CD4-positive, alpha-beta memory T cell (primary cell): ENCODE measurements at regions of chr7 and their contacts with region 1.

Region 1: DNA sequence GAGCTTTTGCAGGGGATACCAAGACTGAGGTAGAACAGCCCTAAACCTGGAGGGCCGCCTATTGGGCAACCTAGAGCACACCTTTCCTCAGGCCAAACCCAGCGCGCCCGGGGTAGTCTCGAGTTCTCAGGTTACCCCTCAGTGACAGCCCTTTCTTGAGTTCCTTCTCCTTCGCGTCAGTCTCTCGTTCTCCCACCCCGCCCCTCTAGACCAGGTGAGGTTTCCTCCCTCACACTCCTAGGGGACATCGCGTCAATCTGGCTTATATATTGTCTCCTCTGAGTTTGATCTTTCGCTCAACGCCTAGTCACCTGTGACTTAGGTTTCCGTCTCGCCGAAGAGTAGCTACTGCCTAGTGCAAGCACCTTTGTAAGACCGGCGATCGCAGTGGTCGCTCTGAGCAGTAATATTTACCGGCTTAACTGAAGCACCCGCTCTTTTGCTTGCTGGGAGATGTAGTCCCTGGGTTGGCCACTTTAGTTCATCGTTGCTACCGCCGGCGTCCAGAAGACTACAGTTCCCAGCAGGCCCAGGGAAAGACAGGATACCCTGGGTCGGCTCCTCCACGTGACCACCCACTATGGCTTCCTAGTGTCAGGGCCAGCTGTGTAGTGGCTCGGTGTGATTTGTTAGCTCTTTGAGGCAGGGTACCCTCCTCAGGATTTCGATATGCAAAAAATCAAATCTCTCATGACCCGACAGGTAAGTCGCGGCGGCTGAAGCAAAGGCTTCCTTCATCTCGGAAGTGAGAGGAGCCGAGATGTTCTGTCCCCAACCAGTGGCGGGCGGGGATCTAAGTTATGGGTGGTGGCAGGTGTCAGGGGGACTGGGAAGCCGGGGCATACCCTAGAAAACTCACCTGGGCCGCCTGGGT is at the start of gene VPS50:
- DNase-seq: peak; percentile 95 to 98 (median 97)
- H3K4me3 ChIP-seq: peak within 1 kb of the TSS; percentile 66 to 99
- H3K4me3 Mint-ChIP-seq: peak within 1 kb of the TSS; percentile 91 to 97 (median 95)
- H3K27ac ChIP-seq: peak within 1 kb of the TSS; percentile 86
- H3K27ac Mint-ChIP-seq: peak within 1 kb of the TSS; percentile 85 to 100 (median 98)
- H3K4me1 ChIP-seq: peaks cover 31% of the 10 kb centered on the region
- H3K4me1 Mint-ChIP-seq: peaks cover 9 to 20% (median 14%) of the 10 kb centered on the region in 4 donors
- H3K27me3 ChIP-seq: no peaks in the 10 kb centered on the region
- H3K27me3 Mint-ChIP-seq: no peaks in the 10 kb centered on the region
- total RNA-seq, gene VPS50: 35.1 to 45.8 TPM

Region 2: GRCh38 chr7:91880413-91881241 is 1351.4 kb before region 1 on chr7 and contains the start of gene MTERF1:
- CTCF ChIA-PET with region 1: no interaction called
- POLR2A ChIA-PET with region 1: no interaction called
- intact Hi-C with region 1: loop called (anchors 1 kb)
- DNase-seq: peak; percentile 89 to 91 (median 90)
- H3K4me3 ChIP-seq: peak within 1 kb of the TSS; percentile 77 to 86
- H3K4me3 Mint-ChIP-seq: peak within 1 kb of the TSS; percentile 92 to 100 (median 98)
- H3K27ac ChIP-seq: peak within 1 kb of the TSS; percentile 71
- H3K27ac Mint-ChIP-seq: peak within 1 kb of the TSS; percentile 88 to 98 (median 95)
- H3K4me1 ChIP-seq: peaks cover 26% of the 10 kb centered on the region
- H3K4me1 Mint-ChIP-seq: peaks cover 30 to 46% (median 35%) of the 10 kb centered on the region in 4 donors
- H3K27me3 ChIP-seq: no peaks in the 10 kb centered on the region
- H3K27me3 Mint-ChIP-seq: no peaks in the 10 kb centered on the region
- total RNA-seq, gene MTERF1: 29.9 to 32.4 TPM

Region 3: DNA sequence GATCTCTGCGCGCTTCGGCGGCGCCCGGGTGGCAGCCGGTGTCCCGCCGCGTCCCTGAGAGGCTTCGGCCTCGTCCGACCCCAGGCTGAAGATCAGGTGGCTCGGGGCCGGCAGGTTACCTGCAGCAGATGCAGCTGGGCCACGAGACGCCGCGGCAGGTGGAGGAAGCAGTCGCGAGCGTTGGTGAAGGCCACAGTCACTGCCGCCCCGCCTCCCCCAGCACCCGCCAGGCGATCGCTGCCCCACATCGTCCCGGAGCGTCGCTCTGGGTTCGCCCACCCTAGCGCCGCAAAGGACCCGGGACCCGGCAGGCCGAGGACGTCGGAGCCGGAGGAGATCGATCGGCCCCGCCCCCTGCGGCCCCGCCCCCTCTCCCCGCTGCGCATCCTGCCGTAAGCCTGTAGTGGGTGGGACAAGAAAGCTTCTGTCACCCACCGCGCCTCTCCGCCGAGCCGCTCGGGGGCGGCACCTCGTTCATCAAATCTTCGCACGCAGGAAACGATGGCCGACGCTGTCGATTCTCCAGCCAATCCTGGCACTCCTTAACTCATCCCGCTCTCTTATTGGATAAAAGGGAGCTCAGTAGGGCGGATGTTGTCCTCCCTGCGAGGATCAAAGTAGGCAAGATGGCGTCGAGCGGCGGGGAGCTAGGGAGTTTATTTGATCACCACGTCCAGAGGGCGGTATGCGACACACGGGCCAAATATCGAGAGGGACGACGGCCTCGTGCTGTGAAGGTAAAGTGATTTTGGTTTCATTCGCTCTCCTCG is 703.7 kb before region 1 on chr7 and contains the starts of genes PEX1 and RBM48:
- CTCF ChIA-PET with region 1: interaction called, 5 read pairs
- POLR2A ChIA-PET with region 1: interaction called, 10 read pairs
- intact Hi-C with region 1: loop called (anchors 1 kb)
- DNase-seq: peak; percentile 93 to 98 (median 98)
- H3K4me3 ChIP-seq: peak within 1 kb of the TSS; percentile 92 to 97
- H3K4me3 Mint-ChIP-seq: peak within 1 kb of the TSS; percentile 93 to 99 (median 96)
- H3K27ac ChIP-seq: peak within 1 kb of the TSS; percentile 91
- H3K27ac Mint-ChIP-seq: peak within 1 kb of the TSS; percentile 87 to 100 (median 98)
- H3K4me1 ChIP-seq: peaks cover 33% of the 10 kb centered on the region
- H3K4me1 Mint-ChIP-seq: peaks cover 31 to 52% (median 38%) of the 10 kb centered on the region in 4 donors
- H3K27me3 ChIP-seq: no peaks in the 10 kb centered on the region
- H3K27me3 Mint-ChIP-seq: no peaks in the 10 kb centered on the region
- total RNA-seq, gene PEX1: 35.4 to 38.0 TPM
- total RNA-seq, gene RBM48: 37.5 to 37.9 TPM

Region 4: GRCh38 chr7:92904292-92905131 is 327.5 kb before region 1 on chr7:
- CTCF ChIA-PET with region 1: no interaction called
- POLR2A ChIA-PET with region 1: no interaction called
- intact Hi-C with region 1: loop called (anchors 5 kb)
- DNase-seq: peak; percentile 54 to 91 (median 63)
- H3K4me3 ChIP-seq: no peak overlapping the region
- H3K4me3 Mint-ChIP-seq: peak overlapping the region in 6 of 8 donors; percentile 6 to 53 (median 18)
- H3K27ac ChIP-seq: no peak overlapping the region
- H3K27ac Mint-ChIP-seq: peak overlapping the region in 6 of 7 donors; percentile 7 to 82 (median 46)
- H3K4me1 ChIP-seq: peaks cover 17% of the 10 kb centered on the region
- H3K4me1 Mint-ChIP-seq: peaks cover 17 to 25% (median 21%) of the 10 kb centered on the region in 4 donors
- H3K27me3 ChIP-seq: no peaks in the 10 kb centered on the region
- H3K27me3 Mint-ChIP-seq: no peaks in the 10 kb centered on the region

Region 5: DNA sequence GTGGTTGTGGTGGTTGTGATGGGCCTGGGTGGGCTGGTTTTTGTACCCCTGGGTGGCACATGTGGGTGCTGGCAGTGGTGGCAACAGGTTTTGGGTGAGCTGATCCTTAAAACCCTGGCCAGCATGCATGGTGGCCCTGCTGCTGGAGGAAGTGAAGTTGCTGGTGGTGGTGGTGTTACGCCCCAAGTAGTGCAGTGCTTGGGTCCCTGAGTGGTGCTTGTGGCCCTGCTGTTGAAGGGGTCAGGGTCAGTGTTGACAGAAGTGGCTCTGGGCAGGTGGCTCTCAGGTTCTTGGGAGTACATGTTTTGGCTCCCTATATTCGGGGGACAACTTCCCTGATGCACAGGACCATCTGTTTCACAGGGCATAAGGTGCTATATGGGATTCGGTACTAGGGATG is 145.3 kb before region 1 on chr7:
- CTCF ChIA-PET with region 1: no interaction called
- POLR2A ChIA-PET with region 1: no interaction called
- intact Hi-C with region 1: no loop called
- DNase-seq: no peak
- H3K4me3 ChIP-seq: no peak overlapping the region
- H3K4me3 Mint-ChIP-seq: no peak overlapping the region
- H3K27ac ChIP-seq: no peak overlapping the region
- H3K27ac Mint-ChIP-seq: no peak overlapping the region
- H3K4me1 ChIP-seq: no peaks in the 10 kb centered on the region
- H3K4me1 Mint-ChIP-seq: no peaks in the 10 kb centered on the region
- H3K27me3 ChIP-seq: peaks cover 3% of the 10 kb centered on the region
- H3K27me3 Mint-ChIP-seq: peaks cover 10 to 14% of the 10 kb centered on the region in 2 donors

Region 6: DNA sequence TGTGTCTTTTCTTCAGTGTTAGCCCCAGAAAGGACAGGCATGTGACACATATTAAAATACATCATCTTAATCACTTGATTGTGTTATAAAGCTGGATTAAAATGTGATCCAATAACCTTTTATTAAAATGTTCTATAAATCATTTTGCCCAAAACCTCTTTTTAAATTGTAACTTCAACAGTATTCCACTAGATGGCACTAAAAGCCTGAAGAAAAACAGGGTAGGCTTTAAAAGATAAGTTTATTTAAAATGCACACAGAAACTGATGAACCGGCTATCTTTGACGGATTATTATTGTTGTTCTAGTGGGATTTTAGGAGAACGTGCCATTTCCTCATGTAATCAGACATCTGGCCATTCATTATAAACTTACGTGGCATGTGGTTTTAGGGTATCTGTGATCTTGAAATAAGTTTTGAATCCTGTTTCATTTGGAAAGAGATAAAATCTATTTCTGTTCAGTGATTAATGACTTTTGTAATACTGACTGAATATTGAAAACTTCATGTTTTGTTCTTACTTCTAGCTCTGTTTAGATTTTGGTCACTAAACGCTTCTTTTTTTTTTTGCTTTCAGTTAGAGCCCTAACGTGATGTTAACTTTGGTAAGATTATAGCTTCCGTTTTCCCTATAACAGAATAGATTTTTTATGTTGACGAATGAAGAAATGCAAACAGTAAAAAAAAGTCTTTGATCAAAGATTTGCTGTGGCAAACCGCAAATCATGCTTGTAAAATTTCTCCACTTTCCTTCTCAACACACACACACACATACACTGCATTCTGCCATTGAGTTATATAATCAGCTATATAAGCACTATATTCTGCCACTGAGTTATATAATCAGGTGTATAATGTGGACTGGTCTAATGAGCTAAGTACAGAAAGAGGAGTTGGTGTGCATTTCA is 13.7 kb after region 1 on chr7:
- CTCF ChIA-PET with region 1: interaction called, 31 read pairs
- POLR2A ChIA-PET with region 1: interaction called, 13 read pairs
- intact Hi-C with region 1: loop called (anchors 1 kb)
- DNase-seq: peak; percentile 35 to 52 (median 46)
- H3K4me3 ChIP-seq: peak overlapping the region in 1 of 2 donors; percentile 9
- H3K4me3 Mint-ChIP-seq: peak overlapping the region; percentile 56 to 79 (median 74)
- H3K27ac ChIP-seq: no peak overlapping the region
- H3K27ac Mint-ChIP-seq: peak overlapping the region in 6 of 7 donors; percentile 37 to 88 (median 68)
- H3K4me1 ChIP-seq: no peaks in the 10 kb centered on the region
- H3K4me1 Mint-ChIP-seq: peaks cover 12 to 15% (median 14%) of the 10 kb centered on the region in 4 donors
- H3K27me3 ChIP-seq: no peaks in the 10 kb centered on the region
- H3K27me3 Mint-ChIP-seq: no peaks in the 10 kb centered on the region

Region 7: DNA sequence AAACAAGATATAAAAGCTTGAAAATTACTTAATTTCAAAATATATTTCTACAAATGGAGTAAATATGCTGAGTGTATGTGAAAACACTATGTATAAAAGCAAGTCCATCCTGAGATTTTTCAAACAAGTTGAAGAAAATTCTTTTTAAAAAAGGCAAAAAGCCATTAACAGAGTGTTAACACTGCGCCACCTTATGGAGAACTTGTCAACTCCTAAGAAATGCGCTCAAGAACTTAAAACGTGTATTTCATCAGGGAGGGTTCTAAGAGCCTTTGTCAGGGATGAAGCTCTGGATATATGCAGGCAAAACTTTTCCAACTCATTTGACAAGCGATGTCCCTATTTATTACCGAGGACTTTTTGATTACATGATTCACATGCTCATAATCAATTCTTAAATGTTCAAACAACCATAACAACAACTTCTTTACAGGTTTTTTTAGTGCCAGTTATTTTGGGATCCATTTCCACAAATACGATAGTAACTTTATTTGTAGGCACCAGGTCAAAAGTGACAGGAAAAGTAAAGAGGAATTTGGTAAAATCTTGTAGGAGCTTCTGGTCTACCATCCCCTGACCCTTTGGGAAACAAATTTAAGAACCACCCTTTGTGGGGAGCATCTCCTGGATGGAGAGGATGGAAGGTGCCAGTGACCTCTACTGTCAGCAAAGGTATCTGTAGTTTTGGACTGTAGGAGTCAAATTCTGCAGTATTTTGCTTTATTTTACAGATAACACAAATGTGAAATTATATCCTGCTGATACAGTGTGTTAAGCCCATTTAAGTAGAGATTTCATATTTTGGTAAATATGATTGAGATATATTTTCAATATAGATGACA is 319.2 kb after region 1 on chr7:
- CTCF ChIA-PET with region 1: no interaction called
- POLR2A ChIA-PET with region 1: no interaction called
- intact Hi-C with region 1: no loop called
- DNase-seq: no peak
- H3K4me3 ChIP-seq: no peak overlapping the region
- H3K4me3 Mint-ChIP-seq: no peak overlapping the region
- H3K27ac ChIP-seq: no peak overlapping the region
- H3K27ac Mint-ChIP-seq: no peak overlapping the region
- H3K4me1 ChIP-seq: no peaks in the 10 kb centered on the region
- H3K4me1 Mint-ChIP-seq: no peaks in the 10 kb centered on the region
- H3K27me3 ChIP-seq: no peaks in the 10 kb centered on the region
- H3K27me3 Mint-ChIP-seq: no peaks in the 10 kb centered on the region

Region 8: DNA sequence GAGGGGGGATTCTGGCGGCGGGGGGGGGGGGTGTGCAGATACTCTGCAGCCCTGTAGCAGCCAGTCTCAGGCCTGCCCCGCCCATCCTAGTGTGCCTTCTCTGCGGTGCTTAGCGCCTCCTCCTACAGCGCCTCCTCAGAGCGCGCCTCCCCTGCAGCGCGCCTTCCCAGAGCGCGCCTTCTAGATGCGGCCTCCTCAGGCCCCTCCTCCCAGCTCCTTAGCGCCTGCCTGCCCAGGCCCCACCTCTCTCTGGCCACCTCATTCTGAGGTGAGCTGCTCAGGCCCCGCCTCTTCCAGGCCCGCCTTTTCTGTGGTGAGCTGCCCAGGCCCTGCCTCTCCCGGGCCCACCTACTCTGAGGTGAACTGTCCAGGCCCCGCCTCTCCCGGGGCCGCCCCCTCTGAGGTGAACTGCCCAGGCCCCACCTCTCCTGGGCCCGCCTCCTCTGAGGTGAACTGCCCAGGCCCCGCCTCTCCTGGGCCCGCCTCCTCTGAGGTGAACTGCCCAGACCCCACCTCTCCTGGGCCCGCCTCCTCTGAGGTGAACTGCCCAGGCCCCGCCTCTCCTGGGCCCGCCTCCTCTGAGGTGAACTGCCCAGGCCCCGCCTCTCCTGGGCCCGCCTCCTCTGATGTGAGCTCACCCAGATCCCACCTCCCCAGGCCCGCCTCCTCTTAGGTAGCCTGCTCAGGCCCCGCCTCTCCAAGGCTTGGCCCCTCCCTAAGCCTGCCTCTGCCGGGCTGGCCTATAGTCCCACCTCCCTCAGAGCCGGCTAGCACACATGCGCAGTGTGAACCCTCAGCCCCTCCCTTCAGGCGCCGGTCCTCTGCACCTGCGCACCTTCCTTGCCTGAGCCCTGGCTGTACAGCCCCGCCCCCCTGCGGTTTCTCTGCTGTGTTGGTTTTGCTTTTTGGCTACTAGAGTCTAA is 1426.0 kb after region 1 on chr7:
- CTCF ChIA-PET with region 1: no interaction called
- POLR2A ChIA-PET with region 1: interaction called, 5 read pairs
- intact Hi-C with region 1: loop called (anchors 1 kb)
- DNase-seq: peak; percentile 92 to 98 (median 97)
- H3K4me3 ChIP-seq: peak overlapping the region in 1 of 2 donors; percentile 30
- H3K4me3 Mint-ChIP-seq: peak overlapping the region; percentile 81 to 95 (median 88)
- H3K27ac ChIP-seq: no peak overlapping the region
- H3K27ac Mint-ChIP-seq: peak overlapping the region in 6 of 7 donors; percentile 74 to 92 (median 84)
- H3K4me1 ChIP-seq: peaks cover 25% of the 10 kb centered on the region
- H3K4me1 Mint-ChIP-seq: peaks cover 8 to 28% (median 19%) of the 10 kb centered on the region in 4 donors
- H3K27me3 ChIP-seq: peaks cover 16% of the 10 kb centered on the region
- H3K27me3 Mint-ChIP-seq: peaks cover 5 to 16% of the 10 kb centered on the region in 2 donors